Ovary (tissue), 10 donors: ENCODE measurements at regions of chr2 and their contacts with region 1.

Region 1: GRCh38 chr2:232444409-232445148 is 11.4 kb upstream of the ALPI start:
- DNase-seq: peak in 1 of 5 donors; percentile 25
- H3K4me3 ChIP-seq: no peak overlapping the region
- H3K27ac ChIP-seq: no peak overlapping the region
- H3K4me1 ChIP-seq: peaks cover 3% of the 10 kb centered on the region
- H3K27me3 ChIP-seq: no peaks in the 10 kb centered on the region
- CTCF ChIP-seq: no peak
- EP300 ChIP-seq: no peak
- POLR2A ChIP-seq: no peak

Region 2: GRCh38 chr2:232521959-232522622 is 77.5 kb after region 1 on chr2:
- intact Hi-C with region 1: loop called (anchors 1 to 5 kb)
- DNase-seq: peak; percentile 39 to 81 (median 77)
- H3K4me3 ChIP-seq: peak overlapping the region; percentile 21
- H3K27ac ChIP-seq: no peak overlapping the region
- H3K4me1 ChIP-seq: no peaks in the 10 kb centered on the region
- H3K27me3 ChIP-seq: no peaks in the 10 kb centered on the region
- CTCF ChIP-seq: peak; percentile 91 to 97 (median 94)
- EP300 ChIP-seq: no peak
- POLR2A ChIP-seq: no peak